A673 (cell line): ENCODE measurements at regions of chr2 and their contacts with region 1.

Region 1: GRCh38 chr2:236512902-236513435 is 56.7 kb upstream of the ACKR3 start:
- DNase-seq: peak; percentile 54
- H3K4me3 ChIP-seq: no peak overlapping the region
- H3K27ac ChIP-seq: no peak overlapping the region
- H3K4me1 ChIP-seq: no peaks in the 10 kb centered on the region
- H3K27me3 ChIP-seq: peaks cover 27% of the 10 kb centered on the region
- CTCF ChIP-seq: peak; percentile 82

Region 2: GRCh38 chr2:236569573-236569973 is 56.6 kb after region 1 on chr2 and contains the start of gene ACKR3:
- CTCF ChIA-PET with region 1: interaction called, 3 read pairs
- POLR2A ChIA-PET with region 1: no interaction called
- intact Hi-C with region 1: loop called (anchors 5 kb)
- DNase-seq: peak; percentile 71
- H3K4me3 ChIP-seq: peak within 1 kb of the TSS; percentile 21
- H3K27ac ChIP-seq: no peak within 1 kb of the TSS
- H3K4me1 ChIP-seq: peaks cover 34% of the 10 kb centered on the region
- H3K27me3 ChIP-seq: peaks cover 54% of the 10 kb centered on the region
- CTCF ChIP-seq: peak; percentile 56
- total RNA-seq, gene ACKR3: 0.31 and 0.52 TPM in 2 replicates

Region 3: DNA sequence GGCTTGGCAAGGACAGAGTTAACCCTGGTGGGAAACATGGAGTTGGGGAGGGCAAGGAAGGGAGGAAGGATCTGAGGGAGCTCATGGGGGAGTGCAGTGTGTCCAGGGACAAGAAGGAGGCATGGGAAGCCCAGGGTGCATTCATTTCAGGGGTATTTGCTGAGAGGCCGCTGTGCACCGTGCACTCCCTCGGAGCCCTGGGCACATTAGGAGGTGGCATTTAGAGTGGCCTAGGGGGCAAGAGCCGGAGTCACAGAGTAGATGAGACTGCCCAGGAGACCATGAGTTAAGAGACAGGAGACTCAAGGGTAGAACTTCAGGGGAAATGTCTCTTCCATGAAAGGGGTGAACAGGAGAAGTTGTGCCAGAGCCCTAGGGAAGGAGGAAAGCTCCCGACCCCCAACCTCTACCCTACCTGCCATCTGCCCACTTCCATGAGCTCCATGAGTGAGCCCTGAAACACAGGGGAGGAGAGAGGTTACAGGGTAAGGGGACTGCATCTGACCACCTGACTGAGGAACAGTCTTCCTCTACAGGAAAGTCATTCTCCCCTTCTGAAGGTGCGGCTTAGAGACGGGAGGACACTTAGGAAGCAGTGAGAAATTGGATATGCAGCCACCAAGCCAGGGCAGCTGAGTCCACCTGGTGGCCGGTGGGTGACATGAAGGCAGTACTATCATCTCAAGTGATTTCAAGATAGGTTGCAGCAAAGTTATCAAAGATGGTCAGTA is 514.2 kb after region 1 on chr2:
- CTCF ChIA-PET with region 1: no interaction called
- POLR2A ChIA-PET with region 1: no interaction called
- intact Hi-C with region 1: loop called (anchors 1 kb)
- DNase-seq: peak; percentile 58
- H3K4me3 ChIP-seq: no peak overlapping the region
- H3K27ac ChIP-seq: no peak overlapping the region
- H3K4me1 ChIP-seq: no peaks in the 10 kb centered on the region
- H3K27me3 ChIP-seq: peaks cover 34% of the 10 kb centered on the region
- CTCF ChIP-seq: peak; percentile 76

Region 4: DNA sequence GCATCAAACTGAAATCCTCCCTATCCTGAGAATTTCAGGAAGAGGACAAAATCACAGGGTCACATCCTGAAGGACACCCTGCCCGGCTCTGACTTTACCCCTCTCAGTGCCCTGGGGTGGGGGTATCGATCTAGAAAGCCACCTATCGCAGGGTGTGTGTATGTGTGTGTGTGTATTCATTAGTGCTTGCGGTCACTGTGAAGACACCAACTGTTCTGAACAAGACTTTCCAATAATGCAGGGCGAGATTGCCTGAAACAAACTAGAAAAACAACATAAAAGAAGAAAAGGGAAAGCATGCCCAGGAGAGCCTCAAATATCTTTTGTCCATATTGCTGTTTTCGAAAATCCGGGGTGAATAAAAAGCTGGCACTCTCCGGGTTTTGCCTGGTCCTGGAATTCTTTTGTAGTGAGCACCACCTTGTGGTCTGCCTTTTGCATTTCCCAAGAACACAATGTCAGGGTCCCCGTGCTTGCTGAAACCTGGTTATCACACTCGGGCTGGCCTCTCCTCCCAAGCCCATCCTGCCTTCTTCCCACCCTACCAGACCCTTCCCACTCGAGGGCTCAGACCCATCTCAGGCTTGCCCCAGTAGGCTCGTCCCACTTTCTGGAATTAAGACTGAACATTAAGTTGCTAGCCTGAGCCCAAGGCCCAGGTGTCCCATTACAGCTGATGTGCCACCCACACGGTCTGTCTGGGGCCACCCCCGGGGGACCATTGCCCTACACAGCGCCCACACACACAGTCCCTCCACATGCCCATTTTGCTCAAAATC is 547.8 kb after region 1 on chr2:
- CTCF ChIA-PET with region 1: interaction called, 8 read pairs
- POLR2A ChIA-PET with region 1: no interaction called
- intact Hi-C with region 1: loop called (anchors 1 kb)
- DNase-seq: peak; percentile 67
- H3K4me3 ChIP-seq: no peak overlapping the region
- H3K27ac ChIP-seq: no peak overlapping the region
- H3K4me1 ChIP-seq: no peaks in the 10 kb centered on the region
- H3K27me3 ChIP-seq: no peaks in the 10 kb centered on the region
- CTCF ChIP-seq: peak; percentile 67

Region 5: GRCh38 chr2:237383991-237384671 is 871.2 kb after region 1 on chr2:
- CTCF ChIA-PET with region 1: no interaction called
- POLR2A ChIA-PET with region 1: no interaction called
- intact Hi-C with region 1: no loop called
- DNase-seq: no peak
- H3K4me3 ChIP-seq: no peak overlapping the region
- H3K27ac ChIP-seq: no peak overlapping the region
- H3K4me1 ChIP-seq: no peaks in the 10 kb centered on the region
- H3K27me3 ChIP-seq: peaks cover 15% of the 10 kb centered on the region
- CTCF ChIP-seq: no peak